Activated CD4-positive, alpha-beta memory T cell treated with anti-CD3 and anti-CD28 coated beads for 36 hours (primary cell): ENCODE measurements at regions of chr4 and their contacts with region 1.

Region 1: DNA sequence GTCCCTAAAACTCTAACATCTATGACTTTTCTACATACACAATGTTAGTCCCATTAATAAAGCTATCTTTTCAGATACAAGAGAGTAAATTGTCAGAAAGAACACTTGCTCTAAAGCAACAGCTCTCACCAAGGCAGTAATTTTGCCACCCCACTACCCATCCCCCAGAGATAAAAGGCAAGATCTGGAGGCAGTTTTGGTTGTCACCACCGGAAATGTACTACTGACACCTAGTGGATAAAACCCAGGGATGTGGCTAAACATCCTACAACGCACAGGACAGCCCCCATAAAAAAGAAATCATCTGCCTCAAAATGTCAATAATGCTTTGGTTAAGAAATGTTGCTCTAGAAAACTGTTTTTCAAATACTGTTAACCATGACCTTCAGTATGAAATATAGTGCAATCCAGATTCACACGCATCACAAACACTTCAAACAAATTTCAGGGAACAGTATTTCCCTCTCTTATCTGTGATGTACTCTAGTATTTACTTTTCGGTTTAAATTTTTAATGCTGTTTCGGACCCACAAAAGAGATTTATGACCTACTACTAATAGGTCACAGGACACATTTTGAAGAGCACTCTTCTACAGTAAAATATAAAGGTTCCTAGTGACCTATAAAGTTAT is 5.1 kb downstream of the FBXL5 start:
- DNase-seq: peak; percentile 65
- H3K4me3 Mint-ChIP-seq: no peak overlapping the region
- H3K27ac Mint-ChIP-seq: peak overlapping the region; percentile 55
- H3K4me1 Mint-ChIP-seq: peaks cover 59% of the 10 kb centered on the region
- H3K27me3 Mint-ChIP-seq: no peaks in the 10 kb centered on the region

Region 2: DNA sequence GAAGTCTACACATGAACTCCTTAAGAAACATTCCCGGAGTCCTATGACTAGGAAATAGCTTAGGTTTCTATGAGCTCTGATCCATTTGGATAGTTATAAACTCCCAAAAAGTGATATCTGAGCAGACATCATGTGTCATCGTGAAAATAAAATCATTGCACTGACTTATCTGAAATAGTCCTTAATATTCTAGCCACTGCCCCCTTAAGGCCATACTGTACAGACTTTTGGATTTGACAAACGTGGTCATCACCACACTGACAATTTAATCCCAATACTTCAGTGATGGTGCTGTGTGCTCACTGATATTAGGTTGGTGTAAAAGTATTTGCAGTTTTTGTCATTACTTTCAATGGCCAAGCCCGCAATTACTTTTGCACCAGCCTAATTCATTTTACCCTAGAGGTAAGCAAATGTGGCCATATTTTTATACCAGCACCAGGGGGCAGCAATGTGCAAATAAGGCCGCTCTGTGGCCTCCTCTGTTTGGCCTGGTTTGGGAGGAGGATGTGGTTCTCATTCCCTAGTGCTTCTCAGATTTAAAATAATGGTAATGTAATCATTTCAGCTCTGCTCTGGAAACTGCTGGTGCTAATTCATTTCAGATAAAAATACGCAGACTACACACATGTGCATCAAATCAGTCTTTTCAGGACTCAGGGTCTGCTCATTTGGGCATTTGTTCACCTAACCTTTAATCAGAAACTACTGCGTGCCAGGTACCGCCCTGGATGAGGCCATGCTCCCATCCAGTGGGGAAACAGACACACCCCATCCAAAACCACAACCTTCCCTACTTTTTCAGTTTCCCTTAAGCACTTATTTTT is 418.6 kb before region 1 on chr4:
- CTCF ChIA-PET with region 1: interaction called, 6 read pairs
- POLR2A ChIA-PET with region 1: no interaction called
- intact Hi-C with region 1: loop called (anchors 2 kb)
- DNase-seq: peak; percentile 81
- H3K4me3 Mint-ChIP-seq: no peak overlapping the region
- H3K27ac Mint-ChIP-seq: no peak overlapping the region
- H3K4me1 Mint-ChIP-seq: peaks cover 28% of the 10 kb centered on the region
- H3K27me3 Mint-ChIP-seq: no peaks in the 10 kb centered on the region

Region 3: GRCh38 chr4:15238720-15239119 is 411.3 kb before region 1 on chr4:
- CTCF ChIA-PET with region 1: interaction called, 6 read pairs
- POLR2A ChIA-PET with region 1: no interaction called
- intact Hi-C with region 1: loop called (anchors 2 kb)
- DNase-seq: peak; percentile 50
- H3K4me3 Mint-ChIP-seq: no peak overlapping the region
- H3K27ac Mint-ChIP-seq: no peak overlapping the region
- H3K4me1 Mint-ChIP-seq: peaks cover 11% of the 10 kb centered on the region
- H3K27me3 Mint-ChIP-seq: no peaks in the 10 kb centered on the region

Region 4: GRCh38 chr4:15479089-15479912 is 170.7 kb before region 1 on chr4:
- CTCF ChIA-PET with region 1: interaction called, 5 read pairs
- POLR2A ChIA-PET with region 1: no interaction called
- intact Hi-C with region 1: loop called (anchors 1 kb)
- DNase-seq: no peak
- H3K4me3 Mint-ChIP-seq: no peak overlapping the region
- H3K27ac Mint-ChIP-seq: no peak overlapping the region
- H3K4me1 Mint-ChIP-seq: no peaks in the 10 kb centered on the region
- H3K27me3 Mint-ChIP-seq: no peaks in the 10 kb centered on the region

Region 5: DNA sequence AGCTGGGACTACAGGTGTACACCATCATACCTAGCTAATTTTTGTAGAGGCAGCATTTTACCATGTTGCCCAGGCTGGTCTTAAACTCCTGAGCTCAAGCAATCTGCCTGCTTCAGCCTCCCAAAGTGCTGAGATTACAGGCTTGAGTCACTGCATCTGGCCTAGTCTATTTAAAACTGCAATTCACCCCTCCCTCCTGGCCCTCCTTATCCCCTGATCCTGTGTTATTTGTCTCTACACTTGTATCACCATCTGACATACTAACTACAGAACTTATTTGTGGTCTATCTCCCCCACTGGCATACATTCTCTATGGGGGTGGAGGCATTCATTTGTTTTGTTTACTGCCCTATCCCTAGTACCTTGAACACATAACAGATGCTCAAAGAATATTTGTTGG is 156.6 kb before region 1 on chr4:
- CTCF ChIA-PET with region 1: no interaction called
- POLR2A ChIA-PET with region 1: no interaction called
- intact Hi-C with region 1: no loop called
- DNase-seq: no peak
- H3K4me3 Mint-ChIP-seq: no peak overlapping the region
- H3K27ac Mint-ChIP-seq: no peak overlapping the region
- H3K4me1 Mint-ChIP-seq: no peaks in the 10 kb centered on the region
- H3K27me3 Mint-ChIP-seq: peaks cover 4% of the 10 kb centered on the region

Region 6: DNA sequence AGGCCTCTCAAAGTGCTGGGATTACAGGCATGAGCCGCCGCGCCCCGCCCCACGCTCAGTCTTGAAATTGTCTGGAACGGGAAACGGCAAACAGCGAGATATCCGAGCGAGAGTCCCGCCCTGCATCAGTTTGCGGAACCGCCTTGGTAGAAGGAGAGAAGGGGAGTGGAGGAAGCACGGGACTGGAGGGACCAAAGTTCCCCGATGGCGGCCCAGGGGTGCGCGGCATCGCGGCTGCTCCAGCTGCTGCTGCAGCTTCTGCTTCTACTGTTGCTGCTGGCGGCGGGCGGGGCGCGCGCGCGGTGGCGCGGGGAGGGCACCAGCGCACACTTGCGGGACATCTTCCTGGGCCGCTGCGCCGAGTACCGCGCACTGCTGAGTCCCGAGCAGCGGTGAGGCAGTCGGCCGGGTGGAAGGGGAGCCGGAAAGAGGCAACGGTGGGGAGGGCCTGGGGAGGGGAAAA is 52.9 kb after region 1 on chr4 and contains the start of gene BST1:
- CTCF ChIA-PET with region 1: no interaction called
- POLR2A ChIA-PET with region 1: no interaction called
- intact Hi-C with region 1: no loop called
- DNase-seq: peak; percentile 67
- H3K4me3 Mint-ChIP-seq: peak within 1 kb of the TSS; percentile 77
- H3K27ac Mint-ChIP-seq: no peak within 1 kb of the TSS
- H3K4me1 Mint-ChIP-seq: peaks cover 7% of the 10 kb centered on the region
- H3K27me3 Mint-ChIP-seq: peaks cover 3% of the 10 kb centered on the region
- total RNA-seq, gene BST1: 0.19 to 0.67 TPM